Activated CD8-positive, alpha-beta T cell treated with anti-CD3 and anti-CD28 coated beads, Interleukin-2, amount 10 ng/mL, durations not matched to agents 7 days and 5 days (primary cell): ENCODE measurements at regions of chr12 and their contacts with region 1.

Region 1: DNA sequence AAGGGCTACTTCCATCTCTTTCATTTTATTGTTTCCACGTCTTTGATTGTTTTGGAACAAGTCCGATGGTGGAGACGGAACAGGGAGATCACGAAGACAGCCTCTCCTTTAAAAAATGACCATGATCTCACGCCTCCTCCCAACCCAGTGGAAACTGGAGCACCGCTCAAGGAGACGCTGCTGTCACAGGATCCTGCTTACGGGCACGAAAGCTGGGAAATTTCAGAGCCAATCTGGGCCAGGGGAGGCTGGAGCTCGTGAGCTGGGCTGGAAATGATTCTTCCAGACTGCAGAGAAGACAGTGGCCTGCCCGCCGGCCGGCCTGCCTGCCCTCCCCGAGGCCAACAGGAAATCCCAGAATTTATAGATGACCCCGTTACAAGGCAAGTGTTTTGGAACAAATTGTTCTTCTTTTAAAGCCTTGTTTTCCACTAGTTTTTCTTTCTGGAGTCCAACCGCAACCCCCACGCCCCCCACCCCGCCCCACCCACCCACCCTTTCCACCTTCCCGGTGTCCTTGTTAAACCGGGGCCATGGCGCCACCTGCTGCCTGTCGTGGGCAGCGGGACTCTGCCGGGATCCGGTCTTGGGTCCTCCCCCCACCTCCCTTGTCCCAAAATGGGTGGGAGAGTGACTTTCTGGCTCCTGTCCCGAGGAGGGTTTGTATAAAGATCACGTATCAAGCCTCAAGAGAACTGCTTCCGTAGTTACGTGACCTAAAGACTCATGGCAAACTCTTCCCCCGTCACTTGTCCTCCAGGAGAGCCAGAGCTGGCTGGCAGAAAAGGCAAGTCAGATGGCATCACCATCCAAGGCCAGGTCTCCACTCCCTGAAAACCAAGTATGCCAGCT is 40.3 kb downstream of the MAP1LC3B2 start:
- DNase-seq: peak; percentile 68
- ATAC-seq: no peak
- H3K4me3 Mint-ChIP-seq: no peak overlapping the region
- H3K27ac Mint-ChIP-seq: no peak overlapping the region
- H3K4me1 Mint-ChIP-seq: peaks cover 44% of the 10 kb centered on the region
- H3K27me3 Mint-ChIP-seq: peaks cover 2% of the 10 kb centered on the region

Region 2: DNA sequence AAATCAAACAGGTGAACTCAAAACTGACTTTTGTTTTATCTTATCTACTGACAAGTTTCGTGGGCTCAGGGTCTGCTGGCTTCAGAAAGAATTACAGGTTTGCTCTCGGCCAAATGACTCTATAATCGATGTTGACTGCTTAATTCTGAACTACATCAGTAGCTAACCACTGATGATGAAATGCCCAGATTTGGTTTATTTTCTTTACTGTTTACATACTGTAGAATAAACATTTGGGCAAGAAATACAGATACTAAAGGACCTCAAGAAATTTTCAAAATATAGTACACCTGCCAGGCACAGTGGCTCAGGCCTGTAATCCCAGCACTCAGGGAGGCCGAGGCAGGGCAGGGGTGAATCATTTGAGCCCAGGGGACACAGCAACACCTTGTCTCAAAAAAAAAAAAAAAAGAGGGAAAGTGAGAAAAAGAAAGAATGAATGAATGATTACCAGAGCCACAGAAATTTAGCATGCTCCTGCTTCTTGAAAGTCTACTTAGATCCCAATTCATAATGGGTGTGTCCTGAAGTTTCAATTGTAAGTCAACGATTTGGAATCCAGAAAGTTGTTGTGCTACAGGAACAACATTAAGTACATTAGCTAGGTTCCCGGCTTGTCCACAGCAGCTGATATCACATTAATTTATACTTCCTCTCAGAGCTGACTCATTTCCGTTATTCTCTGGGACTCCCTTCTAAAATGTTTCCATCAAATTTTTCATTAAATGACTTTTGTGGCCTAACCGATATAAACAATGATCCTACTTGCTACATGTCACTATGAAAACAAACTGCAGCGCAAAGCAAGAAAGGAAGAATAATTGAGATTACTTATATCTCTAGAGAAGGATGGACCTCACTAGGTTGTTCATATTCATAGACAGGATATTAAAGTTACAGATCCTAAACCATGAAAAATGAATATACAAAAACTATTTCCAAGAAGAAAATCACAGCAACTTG is 456.3 kb before region 1 on chr12:
- CTCF ChIA-PET with region 1: interaction called, 12 read pairs
- POLR2A ChIA-PET with region 1: no interaction called
- DNase-seq: no peak
- ATAC-seq: peak; percentile 75
- H3K4me3 Mint-ChIP-seq: no peak overlapping the region
- H3K27ac Mint-ChIP-seq: peak overlapping the region; percentile 58
- H3K4me1 Mint-ChIP-seq: peaks cover 45% of the 10 kb centered on the region
- H3K27me3 Mint-ChIP-seq: no peaks in the 10 kb centered on the region

Region 3: GRCh38 chr12:116466536-116466935 is 133.0 kb before region 1 on chr12:
- CTCF ChIA-PET with region 1: no interaction called
- POLR2A ChIA-PET with region 1: no interaction called
- DNase-seq: no peak
- ATAC-seq: no peak
- H3K4me3 Mint-ChIP-seq: no peak overlapping the region
- H3K27ac Mint-ChIP-seq: no peak overlapping the region
- H3K4me1 Mint-ChIP-seq: no peaks in the 10 kb centered on the region
- H3K27me3 Mint-ChIP-seq: no peaks in the 10 kb centered on the region